Right ventricle myocardium inferior (tissue), 1 donor: ENCODE measurements at regions of chr1 and their contacts with region 1.

Region 1: DNA sequence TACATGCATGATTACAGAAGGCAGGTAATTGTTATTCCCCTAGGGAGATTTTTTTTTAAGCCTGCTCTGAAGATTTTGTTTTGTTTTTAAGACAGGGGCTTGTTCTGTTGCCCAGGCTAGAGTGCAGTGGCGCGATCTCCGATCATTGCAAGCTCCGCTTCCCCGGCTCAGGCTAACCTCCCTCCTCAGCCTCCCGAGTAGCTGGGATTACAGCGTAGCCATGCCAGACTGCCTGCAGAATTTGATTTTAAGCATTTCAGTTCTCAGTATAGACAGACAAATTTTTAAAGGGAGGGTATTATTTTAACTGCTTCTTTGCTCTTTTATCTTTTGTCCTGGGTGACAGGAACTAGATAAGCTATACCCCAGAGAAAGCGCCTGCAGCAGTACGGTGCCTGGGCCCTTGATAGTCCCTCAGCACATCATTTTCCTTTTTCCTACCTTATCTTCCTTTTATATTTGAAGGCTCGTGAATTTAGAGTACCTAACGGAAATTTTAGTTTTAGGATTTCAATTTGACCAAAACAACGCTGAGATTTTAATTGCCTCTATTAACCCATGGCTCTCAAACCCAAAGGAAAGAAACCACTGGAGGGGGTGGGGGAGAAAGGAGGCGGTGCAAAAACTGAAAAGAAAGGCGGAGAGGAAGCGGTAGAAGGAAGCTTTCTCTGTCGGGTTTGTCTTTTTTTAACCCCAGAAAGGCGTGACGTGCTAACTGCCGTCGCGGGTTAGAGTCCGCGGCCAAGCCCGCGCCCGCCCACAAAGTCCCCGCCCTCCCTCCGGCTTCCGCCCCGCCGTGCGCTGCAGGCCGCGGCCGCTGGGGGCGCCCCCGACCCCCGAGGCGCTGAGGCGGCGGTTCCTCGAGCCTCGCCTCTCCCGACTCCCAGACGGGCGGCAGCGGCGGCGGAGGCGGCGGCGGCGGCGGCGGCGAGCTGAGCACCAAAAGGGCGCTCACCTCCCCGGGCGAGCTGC is at the start of gene EEIG2:
- DNase-seq: peak; percentile 93
- ATAC-seq: peak; percentile 95
- total RNA-seq, gene EEIG2: 5.5 TPM

Region 2: GRCh38 chr1:108512239-108512981 is 47.1 kb before region 1 on chr1:
- intact Hi-C with region 1: loop called (anchors 5 kb)
- DNase-seq: no peak
- ATAC-seq: no peak

Region 3: DNA sequence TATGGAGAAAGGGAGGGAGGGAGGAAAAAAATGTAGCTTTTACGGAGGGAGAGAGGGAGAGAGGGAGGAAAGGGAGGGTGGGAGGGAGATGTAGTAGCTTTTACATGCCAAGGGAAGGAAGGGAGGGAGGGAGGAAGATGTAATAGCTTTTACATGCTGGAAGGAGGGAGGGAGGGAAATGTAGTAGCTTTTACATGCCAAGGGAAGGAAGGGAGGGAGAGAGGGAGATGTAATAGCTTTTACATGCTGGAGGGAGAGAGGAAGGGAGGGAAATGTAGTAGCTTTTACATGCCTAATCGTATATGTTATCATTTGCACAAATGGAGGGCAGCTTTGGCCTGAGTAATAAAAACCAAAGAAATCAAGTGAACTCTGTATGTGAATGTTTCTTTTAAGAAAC is 36.0 kb after region 1 on chr1:
- intact Hi-C with region 1: loop called (anchors 5 kb)
- DNase-seq: no peak
- ATAC-seq: peak; percentile 48

Region 4: GRCh38 chr1:108643492-108644335 is 84.2 kb after region 1 on chr1:
- intact Hi-C with region 1: loop called (anchors 1 kb)
- DNase-seq: no peak
- ATAC-seq: peak; percentile 63